ENCODE measurements at regions of chr3 and their contacts with region 1.

Region 1: DNA sequence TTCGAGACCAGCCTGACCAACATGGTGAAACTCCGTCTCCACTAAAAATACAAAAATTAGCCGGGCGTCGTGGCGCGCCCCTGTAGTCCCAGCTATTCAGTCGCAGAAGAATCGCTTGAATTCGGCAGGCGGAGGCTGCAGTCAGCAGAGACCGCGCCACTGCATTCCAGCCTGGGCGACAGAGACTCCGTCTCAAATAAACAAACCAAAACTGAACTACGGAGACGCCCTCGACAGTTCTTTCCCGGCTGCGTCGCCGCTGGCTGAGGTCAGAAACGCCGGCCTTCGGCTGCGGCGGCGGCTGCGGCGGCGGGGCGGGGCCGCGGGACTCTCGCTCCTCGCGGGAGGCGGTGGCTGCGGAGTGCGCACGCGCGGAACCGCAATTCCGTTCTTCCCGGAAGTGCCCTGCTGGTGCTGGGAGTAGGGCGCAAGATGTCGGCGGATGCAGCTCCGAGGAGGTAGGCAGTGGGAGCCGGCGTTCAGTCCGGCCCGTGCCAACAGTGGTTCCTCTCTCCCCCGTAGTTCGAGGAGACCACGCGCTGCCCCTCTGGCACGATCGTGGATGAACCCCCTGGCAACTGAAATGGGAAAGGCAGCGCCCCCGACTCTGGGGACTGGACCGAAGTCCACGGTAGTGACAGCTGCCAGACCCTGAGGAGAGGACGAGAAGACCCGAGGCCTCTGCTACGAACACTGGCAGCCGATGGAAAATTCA is 49.5 kb downstream of the TMEM44 start:
- DNase-seq: peak; percentile 91 to 95
- H3K4me3 ChIP-seq: peak overlapping the region; percentile 78 to 92
- H3K27ac ChIP-seq: peak overlapping the region; percentile 89 to 90
- H3K4me1 ChIP-seq: no peaks in the 10 kb centered on the region
- H3K27me3 ChIP-seq: no peaks in the 10 kb centered on the region
- CTCF ChIP-seq: peak in 2 of 4 experiments; percentile 9 to 41
- POLR2A ChIP-seq: peak; percentile 69 to 93

Region 2: DNA sequence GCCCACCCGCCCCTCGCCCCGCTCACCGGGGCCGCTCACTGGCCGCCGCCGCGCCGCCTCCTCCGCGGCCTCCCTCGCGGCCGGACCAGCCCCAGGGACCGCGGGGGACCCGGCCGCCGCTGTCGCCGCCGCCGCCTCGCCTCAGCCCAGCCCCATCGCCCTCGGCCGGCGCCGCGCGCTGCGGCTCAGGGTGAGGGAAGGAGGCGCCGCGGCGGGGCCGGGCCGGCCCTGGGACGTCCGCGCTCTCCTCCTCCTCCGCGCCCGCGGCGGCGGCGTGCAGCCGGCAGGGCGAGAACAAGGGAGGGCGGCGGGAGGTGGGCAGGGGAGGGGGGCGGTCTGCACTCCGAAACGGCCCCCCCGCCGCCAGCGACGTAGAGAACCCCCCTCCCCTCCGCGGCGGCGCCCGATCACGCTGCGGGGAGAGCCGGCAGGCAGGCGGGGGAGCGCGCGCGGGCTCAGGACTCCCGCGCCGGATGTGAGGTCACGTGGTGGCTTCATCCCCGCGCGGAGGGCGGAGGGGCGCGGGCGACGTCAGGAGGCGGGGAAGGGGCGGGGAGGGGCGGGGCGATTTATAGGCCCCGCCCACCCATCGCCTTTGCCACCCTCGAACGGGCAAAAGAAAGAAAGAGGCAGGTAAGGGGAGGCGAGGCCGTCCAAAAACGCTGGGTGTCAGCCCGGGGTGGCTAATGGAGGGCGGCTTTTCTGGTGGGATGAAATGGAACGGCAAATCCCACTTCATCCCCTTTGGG is 97.0 kb before region 1 on chr3 and contains the start of gene ATP13A3:
- intact Hi-C with region 1: loop called (anchors 5 kb)
- DNase-seq: peak; percentile 87 to 88
- H3K4me3 ChIP-seq: peak within 1 kb of the TSS; percentile 45 to 89
- H3K27ac ChIP-seq: peak within 1 kb of the TSS; percentile 89 to 93
- H3K4me1 ChIP-seq: no peaks in the 10 kb centered on the region
- H3K27me3 ChIP-seq: no peaks in the 10 kb centered on the region
- CTCF ChIP-seq: no peak
- POLR2A ChIP-seq: peak; percentile 54 to 92
- total RNA-seq, gene ATP13A3: 43.3 to 148 (median 82.9) TPM

Measured in uterus (tissue), 4 donors.